Prostate gland (tissue), 2 donors: ENCODE measurements at regions of chr12 and their contacts with region 1.

Region 1: GRCh38 chr12:13278249-13278787 is 81.8 kb downstream of the EMP1 start:
- DNase-seq: peak; percentile 39
- H3K4me3 ChIP-seq: no peak overlapping the region
- H3K27ac ChIP-seq: no peak overlapping the region
- H3K4me1 ChIP-seq: no peaks in the 10 kb centered on the region
- H3K27me3 ChIP-seq: no peaks in the 10 kb centered on the region
- CTCF ChIP-seq: peak; percentile 82 to 95 (median 88)
- POLR2A ChIP-seq: no peak

Region 2: GRCh38 chr12:13534645-13535398 is 256.5 kb after region 1 on chr12:
- intact Hi-C with region 1: loop called (anchors 5 kb)
- DNase-seq: peak; percentile 10
- H3K4me3 ChIP-seq: no peak overlapping the region
- H3K27ac ChIP-seq: no peak overlapping the region
- H3K4me1 ChIP-seq: no peaks in the 10 kb centered on the region
- H3K27me3 ChIP-seq: no peaks in the 10 kb centered on the region
- CTCF ChIP-seq: peak; percentile 38 to 58 (median 53)
- POLR2A ChIP-seq: no peak

Region 3: DNA sequence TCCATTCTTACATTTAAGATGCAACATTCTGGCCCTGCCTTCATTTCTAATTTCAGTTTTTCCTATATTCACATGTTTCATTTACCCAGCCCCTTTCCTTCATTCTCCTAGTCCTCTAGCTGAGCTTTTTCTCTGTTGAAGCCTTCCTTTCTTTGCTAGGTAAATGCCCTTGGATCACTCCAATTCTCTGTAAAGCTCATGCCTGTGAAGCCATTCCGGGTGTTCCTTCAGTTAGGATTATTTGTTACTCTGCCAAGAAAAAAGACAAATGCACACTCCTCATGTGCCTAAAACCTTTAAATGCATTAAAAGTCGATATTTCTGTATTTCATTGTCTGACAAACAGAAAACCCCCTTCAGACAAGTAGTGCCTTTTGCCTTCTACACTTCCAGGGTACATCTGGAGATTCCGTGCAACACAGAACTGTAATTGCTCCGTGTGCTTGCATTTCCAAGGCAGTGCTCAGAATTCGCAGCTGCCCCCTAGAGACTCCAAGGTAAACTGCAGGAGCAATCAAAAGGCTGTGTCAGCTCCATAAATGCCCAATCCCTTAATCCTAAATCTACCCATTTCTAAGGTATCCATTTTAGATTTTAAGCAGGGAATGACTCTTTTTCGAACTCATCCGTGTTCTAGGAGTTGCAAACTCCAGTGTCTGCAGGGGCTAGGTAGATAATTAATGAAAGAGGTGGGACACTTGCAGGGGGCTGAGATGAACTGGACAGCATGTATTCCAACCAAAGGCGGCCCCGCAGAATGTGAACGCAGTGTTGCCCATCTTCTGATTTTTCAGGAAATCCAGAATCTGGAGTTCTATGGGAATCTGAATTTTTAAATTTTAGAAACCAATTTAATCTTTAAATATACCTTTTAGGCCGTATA is 382.9 kb after region 1 on chr12:
- intact Hi-C with region 1: loop called (anchors 2 kb)
- DNase-seq: peak; percentile 13
- H3K4me3 ChIP-seq: no peak overlapping the region
- H3K27ac ChIP-seq: no peak overlapping the region
- H3K4me1 ChIP-seq: no peaks in the 10 kb centered on the region
- H3K27me3 ChIP-seq: no peaks in the 10 kb centered on the region
- CTCF ChIP-seq: peak; percentile 31 to 57 (median 44)
- POLR2A ChIP-seq: no peak